Breast epithelium (tissue), 4 donors: ENCODE measurements at regions of chr1 and their contacts with region 1.

Region 1: DNA sequence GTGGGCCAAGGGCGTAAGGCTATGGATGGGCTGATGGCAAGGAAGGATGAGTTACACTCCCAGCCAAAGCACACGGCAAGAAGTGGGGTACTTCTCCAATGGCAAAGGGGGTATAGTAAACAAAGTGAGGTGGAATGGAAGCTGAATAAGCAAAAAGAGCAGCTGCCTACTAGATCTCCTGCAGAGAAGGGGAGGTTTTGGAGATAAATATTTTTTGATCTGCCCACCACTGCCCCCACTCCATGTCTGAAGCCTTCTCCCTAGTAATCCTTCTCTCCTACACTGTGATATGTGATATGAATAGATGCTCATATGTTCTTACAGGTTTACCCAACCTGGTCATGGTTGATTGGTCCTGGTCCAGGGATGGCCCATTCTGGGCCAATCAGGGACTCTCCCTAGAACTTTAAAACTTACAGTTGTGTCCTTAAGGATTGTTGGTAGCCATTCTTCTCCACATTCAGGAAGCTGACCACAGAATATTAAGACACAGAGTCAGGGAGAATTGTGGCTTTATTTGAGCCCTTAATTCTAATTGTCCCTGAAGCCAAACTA is 436.8 kb downstream of the OMA1 start:
- DNase-seq: no peak
- H3K4me3 ChIP-seq: no peak overlapping the region
- H3K27ac ChIP-seq: no peak overlapping the region
- H3K4me1 ChIP-seq: no peaks in the 10 kb centered on the region
- H3K27me3 ChIP-seq: no peaks in the 10 kb centered on the region
- CTCF ChIP-seq: no peak
- POLR2A ChIP-seq: no peak

Region 2: DNA sequence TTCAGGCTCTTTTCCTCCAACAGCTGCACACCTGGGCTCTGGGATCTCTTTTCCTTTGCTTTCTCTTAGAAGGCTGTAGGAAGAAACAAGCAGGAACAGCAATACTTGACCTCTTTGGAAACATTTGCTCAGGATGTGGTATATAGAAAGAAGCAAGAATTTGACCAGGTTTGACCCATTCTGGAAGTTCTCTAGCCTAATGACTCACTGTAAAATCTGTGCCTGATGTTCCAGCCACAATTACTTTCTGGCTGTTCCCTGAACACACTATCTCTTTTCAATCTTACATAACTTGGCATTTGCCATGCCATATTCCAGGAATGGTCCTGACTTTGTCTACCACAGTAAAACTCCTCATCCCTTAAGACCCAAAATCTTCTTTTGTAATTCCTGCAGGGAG is 266.0 kb before region 1 on chr1:
- intact Hi-C with region 1: loop called (anchors 5 kb)
- DNase-seq: no peak
- H3K4me3 ChIP-seq: no peak overlapping the region
- H3K27ac ChIP-seq: no peak overlapping the region
- H3K4me1 ChIP-seq: no peaks in the 10 kb centered on the region
- H3K27me3 ChIP-seq: no peaks in the 10 kb centered on the region
- CTCF ChIP-seq: no peak
- POLR2A ChIP-seq: no peak

Region 3: DNA sequence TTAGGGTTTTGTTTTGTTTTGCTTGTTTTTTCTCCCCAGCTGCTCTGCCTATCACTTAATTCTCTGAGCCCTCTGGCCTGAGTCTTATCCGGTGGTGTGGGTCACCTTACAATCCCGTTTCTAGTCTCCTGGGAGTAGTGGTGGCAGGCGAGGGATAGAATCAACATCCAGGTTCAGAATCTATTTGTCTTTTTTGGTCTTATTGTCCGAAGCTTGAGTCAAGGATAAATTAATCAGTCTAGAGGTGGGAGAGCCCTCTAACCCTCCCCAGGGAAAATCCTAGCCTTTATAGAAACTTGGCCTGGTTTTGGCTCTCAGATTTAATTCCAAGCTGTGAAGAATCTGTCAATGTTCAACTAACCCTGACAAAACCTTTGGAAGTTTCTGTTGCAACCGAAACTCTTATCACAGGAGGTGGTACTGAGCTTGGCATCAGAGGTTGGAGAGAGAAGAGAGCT is 1433.5 kb after region 1 on chr1:
- intact Hi-C with region 1: no loop called
- DNase-seq: no peak
- H3K4me3 ChIP-seq: no peak overlapping the region
- H3K27ac ChIP-seq: no peak overlapping the region
- H3K4me1 ChIP-seq: no peaks in the 10 kb centered on the region
- H3K27me3 ChIP-seq: no peaks in the 10 kb centered on the region
- CTCF ChIP-seq: no peak
- POLR2A ChIP-seq: no peak